ENCODE measurements at regions of chr3 and their contacts with region 1.

Region 1: DNA sequence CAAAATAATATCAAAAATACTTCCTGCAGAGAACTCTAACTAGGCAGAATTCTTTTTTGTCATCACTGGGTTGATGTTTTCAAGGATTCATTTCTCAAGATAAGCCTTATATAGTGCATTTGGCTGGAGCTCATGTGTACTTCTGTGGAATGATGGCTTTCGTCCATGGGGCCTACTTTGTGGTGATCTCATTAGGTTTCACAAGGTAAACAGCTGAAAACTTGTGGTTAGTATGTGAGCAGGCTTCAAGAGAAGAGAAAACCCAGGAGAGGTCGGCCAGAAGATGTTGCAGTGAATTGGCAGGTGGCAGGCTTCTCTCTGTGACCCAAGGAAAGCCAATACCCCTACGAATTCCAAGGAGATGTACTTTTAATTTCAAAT is 121.4 kb upstream of the PHLDB2 start:
- DNase-seq: no peak
- ATAC-seq: no peak
- H3K4me3 ChIP-seq: no peak overlapping the region
- H3K27ac ChIP-seq: peak overlapping the region; percentile 3; the same call in 1 of the 2 replicates
- H3K4me1 ChIP-seq: peaks cover 59 to 88% of the 10 kb centered on the region in 2 experiments
- H3K27me3 ChIP-seq: no peaks in the 10 kb centered on the region
- CTCF ChIP-seq: no peak
- POLR2A ChIP-seq: no peak
- RAD21 ChIP-seq: no peak

Region 2: GRCh38 chr3:111859974-111860859 is 122.5 kb after region 1 on chr3:
- CTCF ChIA-PET with region 1: interaction called, 5 read pairs
- POLR2A ChIA-PET with region 1: interaction called, 10 read pairs
- RAD21 ChIA-PET with region 1: no interaction called
- intact Hi-C with region 1: loop called (anchors 5 kb)
- DNase-seq: peak; percentile 82
- ATAC-seq: peak; percentile 56
- H3K4me3 ChIP-seq: peak overlapping the region; percentile 84 to 88
- H3K27ac ChIP-seq: peak overlapping the region; percentile 96
- H3K4me1 ChIP-seq: peaks cover 56 to 80% of the 10 kb centered on the region in 2 experiments
- H3K27me3 ChIP-seq: no peaks in the 10 kb centered on the region
- CTCF ChIP-seq: peak; percentile 36 to 50 (median 39); a peak in 5 of 6 replicates
- POLR2A ChIP-seq: peak; percentile 2
- RAD21 ChIP-seq: peak; percentile 69

Measured in HCT116 (cell line).